Activated CD4-positive, alpha-beta memory T cell treated with anti-CD3 and anti-CD28 coated beads, Interleukin-2, amount 10 ng/mL, durations not matched to agents 7 days and 5 days (primary cell): ENCODE measurements at regions of chr10 and their contacts with region 1.

Region 1: DNA sequence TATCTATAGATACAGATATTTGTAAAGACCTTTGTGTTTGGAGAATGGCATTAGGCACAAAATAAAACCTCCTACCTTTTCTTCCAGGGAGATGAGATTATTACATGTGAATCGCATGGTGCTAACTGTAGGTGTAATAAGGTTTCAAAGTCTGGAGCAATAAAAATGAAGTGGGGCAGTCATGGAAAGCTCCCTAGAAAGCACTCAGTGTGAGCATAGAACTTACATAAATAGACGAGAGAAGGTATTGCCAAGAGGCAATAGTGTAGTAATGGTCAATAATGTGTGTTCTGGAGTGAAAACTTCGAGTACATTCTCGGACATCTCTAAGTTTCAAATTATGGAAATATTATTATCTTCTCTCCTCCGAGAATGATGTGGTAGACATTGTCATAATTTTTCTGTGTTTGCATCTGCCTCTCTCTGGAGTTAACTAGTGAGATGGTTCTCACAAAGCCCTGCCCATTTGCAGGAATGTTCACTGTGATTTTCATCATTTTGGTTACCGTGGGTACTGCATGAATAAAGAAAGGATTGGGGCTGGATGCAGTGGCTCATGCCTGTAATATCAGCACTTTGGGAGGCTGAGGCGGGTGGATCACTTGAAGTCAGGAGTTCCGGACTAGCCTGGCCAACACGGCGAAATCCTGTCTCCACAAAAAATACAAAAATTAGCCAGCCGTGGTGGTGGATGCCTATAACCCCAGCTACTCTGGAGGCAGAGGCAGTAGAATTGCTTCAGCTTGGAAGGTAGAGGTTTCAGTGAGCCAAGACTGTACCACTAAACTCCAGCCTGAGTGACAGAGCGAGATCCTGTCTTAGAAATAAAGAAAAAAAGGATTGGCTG is 10.6 kb downstream of the VIM start:
- DNase-seq: no peak
- H3K4me3 Mint-ChIP-seq: no peak overlapping the region
- H3K27ac Mint-ChIP-seq: no peak overlapping the region
- H3K4me1 Mint-ChIP-seq: peaks cover 31% of the 10 kb centered on the region
- H3K27me3 Mint-ChIP-seq: no peaks in the 10 kb centered on the region

Region 2: DNA sequence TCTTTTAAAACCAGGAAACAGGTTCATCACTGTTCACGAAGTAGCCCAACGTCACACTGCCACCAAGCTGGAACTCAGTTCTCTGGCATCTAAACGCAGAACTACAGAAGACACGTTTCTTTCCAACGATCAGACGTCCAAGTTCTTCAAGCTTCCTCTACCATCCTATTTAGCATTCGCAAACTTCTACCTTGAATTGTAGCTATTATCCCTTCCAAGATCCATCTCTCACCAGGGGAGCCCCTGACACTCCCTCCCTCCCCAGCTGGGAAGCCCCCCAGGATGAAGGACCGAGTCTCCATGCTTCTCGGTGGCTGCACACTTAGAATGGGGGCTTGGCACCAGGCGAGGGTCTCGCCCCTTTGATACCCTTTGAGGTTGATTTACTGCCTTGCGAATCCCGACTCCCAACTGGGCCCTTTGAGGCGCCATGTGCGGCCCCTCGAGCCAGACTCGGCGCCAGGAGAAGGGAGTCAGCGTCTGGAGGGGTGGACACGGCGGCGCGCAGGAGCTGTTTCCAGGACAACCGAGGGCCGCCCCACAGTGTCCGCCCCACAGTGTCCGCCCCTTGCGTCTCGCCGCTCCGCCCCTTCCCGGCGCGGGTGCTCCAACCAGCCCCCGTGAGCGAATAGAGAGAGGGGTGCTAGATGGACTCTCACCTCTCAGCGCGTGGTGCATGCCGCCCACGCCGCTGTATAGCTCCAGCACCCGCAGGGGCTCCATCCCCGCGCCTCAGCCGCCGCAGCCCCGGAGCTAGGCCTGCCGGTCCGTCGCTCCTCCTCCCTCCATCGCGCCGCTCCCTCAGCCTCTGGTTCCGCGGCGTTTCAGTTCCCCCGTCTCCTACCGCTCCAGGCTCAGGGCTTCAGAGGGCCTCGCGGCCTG is 37.5 kb before region 1 on chr10 and contains the start of gene TRDMT1:
- CTCF ChIA-PET with region 1: no interaction called
- POLR2A ChIA-PET with region 1: interaction called, 180 read pairs
- DNase-seq: peak; percentile 77
- H3K4me3 Mint-ChIP-seq: peak within 1 kb of the TSS; percentile 92
- H3K27ac Mint-ChIP-seq: peak within 1 kb of the TSS; percentile 80
- H3K4me1 Mint-ChIP-seq: peaks cover 57% of the 10 kb centered on the region
- H3K27me3 Mint-ChIP-seq: no peaks in the 10 kb centered on the region
- total RNA-seq, gene TRDMT1: 12.3 to 12.7 TPM

Region 3: DNA sequence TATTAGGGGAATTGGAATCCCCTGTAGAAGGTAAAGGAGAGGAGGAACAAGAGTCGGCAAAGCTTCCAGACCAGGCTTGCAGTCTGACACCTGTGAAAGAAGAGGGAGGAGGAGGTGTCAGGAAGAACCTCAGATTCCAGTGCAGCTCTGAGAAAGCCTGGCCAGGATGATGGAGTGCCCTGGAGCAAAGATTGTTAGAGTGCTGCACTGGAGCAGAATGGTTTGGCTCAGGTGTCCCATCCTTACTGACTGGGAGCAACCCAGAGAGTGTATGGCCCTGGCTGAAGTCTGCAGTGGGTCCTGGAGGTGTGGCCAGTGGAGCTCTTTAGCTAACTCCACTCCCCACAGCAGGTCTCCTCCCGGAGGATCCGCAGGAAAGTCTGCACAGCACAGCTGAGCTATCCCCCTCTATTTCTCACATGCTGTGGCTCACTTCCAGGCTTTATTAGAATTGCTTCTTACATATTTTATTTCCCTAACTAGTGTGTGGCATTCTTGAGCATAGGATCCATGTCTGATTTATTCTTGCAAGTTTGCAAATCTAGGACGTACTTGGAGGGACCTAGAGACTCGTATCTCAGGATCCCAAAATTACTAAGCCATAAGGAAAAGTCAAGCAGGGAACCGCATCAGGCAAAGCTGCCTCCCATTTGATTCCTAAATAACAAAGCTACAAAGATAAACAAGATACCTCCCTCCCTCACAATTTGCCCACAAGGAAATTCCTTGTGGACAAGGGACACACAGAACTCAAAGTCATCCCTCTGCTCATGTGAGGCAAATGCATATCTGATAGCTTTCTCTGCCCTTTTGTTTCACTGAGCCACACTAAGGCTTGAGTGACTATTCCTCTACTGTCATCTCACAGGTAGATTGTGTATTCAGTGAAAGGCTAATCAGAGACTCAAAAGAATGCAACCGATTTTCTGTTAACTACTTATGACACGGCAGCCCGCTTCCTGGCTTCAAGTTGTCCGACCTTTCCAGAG is 48.2 kb after region 1 on chr10:
- CTCF ChIA-PET with region 1: no interaction called
- POLR2A ChIA-PET with region 1: no interaction called
- DNase-seq: no peak
- H3K4me3 Mint-ChIP-seq: no peak overlapping the region
- H3K27ac Mint-ChIP-seq: no peak overlapping the region
- H3K4me1 Mint-ChIP-seq: no peaks in the 10 kb centered on the region
- H3K27me3 Mint-ChIP-seq: peaks cover 29% of the 10 kb centered on the region